Breast epithelium (tissue), 4 donors: ENCODE measurements at regions of chr17 and their contacts with region 1.

Region 1: DNA sequence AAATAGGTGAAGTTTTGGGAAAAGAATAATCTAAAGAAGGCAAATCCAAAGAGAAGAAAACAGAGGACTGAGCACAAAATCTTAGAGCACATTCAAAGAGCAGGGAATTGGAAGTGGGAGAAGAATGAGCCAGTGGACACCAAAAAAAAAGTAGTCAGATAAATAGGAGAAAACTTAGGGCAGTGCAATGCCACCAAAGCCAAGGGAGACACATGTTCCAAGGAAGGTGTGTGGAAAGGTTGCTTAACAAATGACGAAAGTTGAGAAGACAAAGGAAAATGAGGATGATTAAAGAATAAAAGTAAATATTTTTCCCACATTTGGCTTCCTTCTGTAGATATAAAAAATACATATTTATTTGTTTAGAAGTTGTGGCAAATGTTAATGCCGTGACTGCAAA is 237.6 kb downstream of the TANC2 start:
- DNase-seq: no peak
- H3K4me3 ChIP-seq: no peak overlapping the region
- H3K27ac ChIP-seq: no peak overlapping the region
- H3K4me1 ChIP-seq: no peaks in the 10 kb centered on the region
- H3K27me3 ChIP-seq: no peaks in the 10 kb centered on the region
- CTCF ChIP-seq: no peak
- POLR2A ChIP-seq: no peak

Region 2: GRCh38 chr17:63262751-63263476 is 59.3 kb after region 1 on chr17:
- intact Hi-C with region 1: loop called (anchors 2 kb)
- DNase-seq: no peak
- H3K4me3 ChIP-seq: no peak overlapping the region
- H3K27ac ChIP-seq: no peak overlapping the region
- H3K4me1 ChIP-seq: no peaks in the 10 kb centered on the region
- H3K27me3 ChIP-seq: no peaks in the 10 kb centered on the region
- CTCF ChIP-seq: no peak
- POLR2A ChIP-seq: no peak